CD8-positive, alpha-beta T cell (primary cell): ENCODE measurements at regions of chr10 and their contacts with region 1.

Region 1: GRCh38 chr10:69994262-69994661 is 58.4 kb upstream of the MACROH2A2 start:
- DNase-seq: peak in 2 of 9 experiments; percentile 18 to 31
- ATAC-seq: no peak
- H3K4me3 ChIP-seq: no peak overlapping the region
- H3K4me3 Mint-ChIP-seq: no peak overlapping the region
- H3K27ac ChIP-seq: no peak overlapping the region
- H3K27ac Mint-ChIP-seq: no peak overlapping the region
- H3K4me1 ChIP-seq: no peaks in the 10 kb centered on the region
- H3K4me1 Mint-ChIP-seq: no peaks in the 10 kb centered on the region
- H3K27me3 ChIP-seq: no peaks in the 10 kb centered on the region
- H3K27me3 Mint-ChIP-seq: peaks cover 4% of the 10 kb centered on the region
- CTCF ChIP-seq: no peak

Region 2: DNA sequence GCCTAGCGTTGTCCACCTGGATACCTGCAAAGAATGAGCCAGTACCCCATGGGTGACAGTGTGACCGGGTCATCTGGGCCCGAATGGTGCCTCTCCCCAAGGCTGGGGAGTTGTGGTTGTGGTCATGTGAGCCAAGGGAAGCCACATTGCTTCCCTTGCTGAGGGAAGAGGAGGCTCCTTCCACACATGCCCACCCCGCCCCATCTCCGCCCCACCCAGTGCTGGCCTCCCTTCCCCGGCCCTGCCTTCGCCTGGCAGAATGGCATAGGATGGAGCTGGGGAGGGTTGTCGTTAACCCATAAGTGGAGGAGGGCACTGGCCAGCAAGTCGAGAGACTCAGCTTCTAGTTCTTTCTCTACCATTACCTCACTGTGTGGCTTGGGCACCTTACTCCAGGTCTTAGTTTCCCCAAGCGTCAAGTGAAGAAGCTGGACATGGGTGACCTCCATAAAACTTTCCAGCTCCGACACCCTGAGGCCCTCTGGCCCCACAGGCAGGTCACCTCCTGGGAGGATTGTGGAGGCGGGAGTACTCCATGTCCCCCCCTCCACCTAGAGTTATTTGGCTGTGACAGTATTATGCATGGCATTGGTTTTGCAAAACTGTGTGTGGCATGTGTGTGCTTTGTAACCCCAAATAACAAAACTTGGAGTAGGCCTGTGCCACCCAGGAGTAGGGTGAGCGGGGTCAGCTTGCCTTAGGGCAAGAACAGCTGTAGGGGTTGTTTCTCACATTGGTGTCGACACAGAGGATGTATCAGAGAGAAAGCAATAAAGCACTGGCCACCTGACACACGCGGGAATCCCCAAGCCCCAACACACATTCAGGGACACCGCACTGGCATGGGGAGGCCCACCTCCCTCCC is 32.1 kb before region 1 on chr10:
- CTCF ChIA-PET with region 1: interaction called, 7 read pairs
- POLR2A ChIA-PET with region 1: no interaction called
- intact Hi-C with region 1: loop called in 1 of 2 experiments (anchors 1 kb)
- DNase-seq: no peak
- ATAC-seq: no peak
- H3K4me3 ChIP-seq: no peak overlapping the region
- H3K4me3 Mint-ChIP-seq: no peak overlapping the region
- H3K27ac ChIP-seq: no peak overlapping the region
- H3K27ac Mint-ChIP-seq: no peak overlapping the region
- H3K4me1 ChIP-seq: no peaks in the 10 kb centered on the region
- H3K4me1 Mint-ChIP-seq: no peaks in the 10 kb centered on the region
- H3K27me3 ChIP-seq: no peaks in the 10 kb centered on the region
- H3K27me3 Mint-ChIP-seq: peaks cover 24% of the 10 kb centered on the region
- CTCF ChIP-seq: no peak